Cardiac septum (tissue), 1 donor: ENCODE measurements at regions of chr19 and their contacts with region 1.

Region 1: DNA sequence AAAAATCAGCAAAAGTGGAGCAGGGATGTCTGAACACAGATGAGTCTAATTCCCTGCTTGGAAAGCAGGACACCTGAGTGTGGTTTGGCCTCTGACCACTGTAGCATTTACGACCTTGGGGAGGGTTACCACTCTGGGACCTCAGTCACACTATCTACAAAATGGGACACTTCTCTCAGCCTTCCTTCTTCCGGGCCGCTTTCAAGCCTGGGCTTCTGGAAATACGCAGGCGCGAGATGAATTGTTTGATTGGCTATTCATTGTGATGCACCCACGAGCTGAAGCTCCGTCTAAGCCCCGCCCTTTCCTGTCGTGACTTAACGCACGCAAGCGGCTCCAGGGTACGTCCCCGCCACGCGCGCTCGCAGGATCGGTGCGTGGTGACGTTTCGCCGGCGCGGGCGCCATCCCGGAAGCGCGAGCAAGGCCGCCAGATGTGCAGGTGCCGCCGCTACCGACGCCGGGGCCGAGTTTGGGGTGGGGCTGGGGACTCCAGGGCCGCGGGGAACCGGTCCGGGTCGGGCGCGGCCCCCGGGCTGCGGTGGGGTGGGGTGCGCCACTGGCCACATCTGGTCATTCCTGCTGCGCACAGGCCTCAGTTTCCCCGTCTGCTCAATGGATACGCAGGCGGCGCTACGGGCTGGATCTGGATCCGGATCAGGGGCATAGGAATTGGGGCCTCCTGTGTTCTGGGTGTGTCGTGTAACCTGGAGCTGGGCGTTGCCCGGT is at the start of gene KXD1:
- DNase-seq: peak; percentile 99
- total RNA-seq, gene KXD1: 59.6 TPM

Region 2: DNA sequence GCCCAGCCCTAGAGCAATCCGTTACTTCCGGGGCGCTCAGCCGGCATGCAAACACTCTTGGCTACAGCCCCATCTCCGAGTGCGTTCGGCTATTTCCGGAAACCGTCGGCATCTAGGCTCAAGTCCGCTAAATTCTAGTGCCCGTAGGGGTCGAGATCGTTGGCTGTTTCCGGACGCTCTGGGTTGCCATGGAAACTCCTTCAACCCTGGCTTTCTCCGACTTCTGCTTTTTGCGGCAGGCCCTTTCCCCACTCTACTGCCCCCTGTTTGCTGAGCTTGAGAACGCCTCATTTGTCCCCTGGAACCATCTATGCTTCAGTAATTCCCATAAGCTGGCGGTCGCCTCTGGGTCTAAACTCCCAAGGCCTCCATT is 405.2 kb before region 1 on chr19:
- intact Hi-C with region 1: no loop called
- DNase-seq: peak; percentile 97

Region 3: GRCh38 chr19:18450931-18451845 is 106.5 kb before region 1 on chr19:
- intact Hi-C with region 1: no loop called
- DNase-seq: peak; percentile 93

Region 4: GRCh38 chr19:18521885-18522624 is 35.6 kb before region 1 on chr19 and contains the start of gene ELL:
- intact Hi-C with region 1: loop called (anchors 5 kb)
- DNase-seq: peak; percentile 100
- total RNA-seq, gene ELL: 9.9 TPM

Region 5: DNA sequence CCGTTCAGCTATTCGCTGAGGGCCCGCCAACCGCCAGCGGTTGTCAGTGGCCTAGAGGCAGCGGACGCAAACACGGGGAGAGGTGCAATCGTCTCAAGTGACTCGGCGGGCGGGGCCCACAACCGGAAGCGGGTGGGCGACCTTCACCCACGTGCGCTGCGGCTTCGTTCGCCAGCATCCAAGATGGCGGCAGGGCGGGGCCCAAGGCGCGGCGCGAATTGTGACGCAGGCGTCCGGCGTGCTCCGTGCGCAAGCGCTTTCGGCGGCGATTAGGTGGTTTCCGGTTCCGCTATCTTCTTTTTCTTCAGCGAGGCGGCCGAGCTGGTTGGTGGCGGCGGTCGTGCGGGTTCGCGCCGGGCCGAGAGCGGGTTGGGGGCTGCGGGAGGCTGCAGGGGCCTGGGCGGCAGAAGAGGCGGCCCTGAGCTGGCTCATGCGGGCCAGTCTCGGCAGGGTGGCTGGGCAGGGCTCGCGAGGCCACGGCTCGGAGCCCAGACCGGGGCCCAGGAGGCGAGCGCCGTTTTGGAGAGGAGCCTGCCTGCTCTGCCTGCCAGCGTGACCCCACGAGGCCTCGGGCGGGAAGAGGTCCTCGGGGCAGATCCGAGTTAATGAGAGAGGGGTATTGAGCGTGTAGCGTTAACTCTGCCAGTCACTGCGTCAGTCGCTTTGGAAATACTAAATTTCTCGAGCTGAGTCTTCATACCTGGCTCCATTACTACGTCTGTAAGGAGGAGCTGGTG is 14.1 kb after region 1 on chr19 and contains the start of gene UBA52:
- intact Hi-C with region 1: loop called (anchors 1 kb)
- DNase-seq: peak; percentile 98
- total RNA-seq, gene UBA52: 573 TPM